Calu3 (cell line): ENCODE measurements at regions of chr2 and their contacts with region 1.

Region 1: GRCh38 chr2:75640621-75641121 is 5.9 kb upstream of the MRPL19 start:
- DNase-seq: peak; percentile 72
- H3K4me3 Mint-ChIP-seq: no peak overlapping the region
- H3K27ac Mint-ChIP-seq: no peak overlapping the region
- H3K4me1 Mint-ChIP-seq: peaks cover 8% of the 10 kb centered on the region
- H3K27me3 Mint-ChIP-seq: peaks cover 36% of the 10 kb centered on the region
- CTCF ChIP-seq: peak; percentile 87

Region 2: DNA sequence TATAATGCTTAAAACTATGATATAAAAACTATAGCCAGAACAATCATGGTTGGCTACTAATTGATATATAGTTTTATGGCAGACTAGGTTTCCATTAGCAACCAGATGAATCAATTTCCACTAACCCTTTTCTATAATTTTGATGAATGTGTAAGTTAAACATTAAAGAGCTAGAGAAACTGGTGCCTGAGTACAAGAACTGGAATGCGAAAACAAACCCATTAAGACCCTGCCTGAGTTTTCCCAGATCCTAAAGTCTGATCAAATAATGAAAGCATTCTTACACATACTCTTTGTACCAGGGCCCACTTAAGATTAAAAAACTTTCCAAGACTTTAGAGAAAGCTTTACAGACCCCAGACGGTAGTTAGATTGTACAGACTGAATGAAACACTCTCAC is 27.2 kb after region 1 on chr2:
- CTCF ChIA-PET with region 1: interaction called, 10 read pairs
- intact Hi-C with region 1: no loop called
- DNase-seq: no peak
- H3K4me3 Mint-ChIP-seq: peak overlapping the region; percentile 37
- H3K27ac Mint-ChIP-seq: peak overlapping the region; percentile 56
- H3K4me1 Mint-ChIP-seq: peaks cover 22% of the 10 kb centered on the region
- H3K27me3 Mint-ChIP-seq: no peaks in the 10 kb centered on the region
- CTCF ChIP-seq: no peak

Region 3: GRCh38 chr2:75676464-75676863 is 35.8 kb after region 1 on chr2:
- CTCF ChIA-PET with region 1: interaction called, 22 read pairs
- intact Hi-C with region 1: loop called (anchors 1 kb)
- DNase-seq: no peak
- H3K4me3 Mint-ChIP-seq: no peak overlapping the region
- H3K27ac Mint-ChIP-seq: no peak overlapping the region
- H3K4me1 Mint-ChIP-seq: peaks cover 10% of the 10 kb centered on the region
- H3K27me3 Mint-ChIP-seq: no peaks in the 10 kb centered on the region
- CTCF ChIP-seq: no peak

Region 4: GRCh38 chr2:75716406-75716805 is 75.7 kb after region 1 on chr2:
- CTCF ChIA-PET with region 1: interaction called, 10 read pairs
- intact Hi-C with region 1: loop called (anchors 1 kb)
- DNase-seq: no peak
- H3K4me3 Mint-ChIP-seq: no peak overlapping the region
- H3K27ac Mint-ChIP-seq: no peak overlapping the region
- H3K4me1 Mint-ChIP-seq: no peaks in the 10 kb centered on the region
- H3K27me3 Mint-ChIP-seq: peaks cover 18% of the 10 kb centered on the region
- CTCF ChIP-seq: no peak